Mammary epithelial cell (primary cell): ENCODE measurements at regions of chr5 and their contacts with region 1.

Region 1: GRCh38 chr5:65481635-65482295 is at the start of gene ADAMTS6:
- DNase-seq: peak; percentile 87
- H3K4me3 ChIP-seq: peak within 1 kb of the TSS; percentile 54 to 88 (median 80)
- H3K27ac ChIP-seq: peak within 1 kb of the TSS; percentile 76
- H3K4me1 ChIP-seq: peaks cover 9% of the 10 kb centered on the region
- H3K27me3 ChIP-seq: no peaks in the 10 kb centered on the region
- CTCF ChIP-seq: no peak
- total RNA-seq, gene ADAMTS6: 47.5 to 63.7 TPM

Region 2: GRCh38 chr5:64229163-64229774 is 1252.5 kb before region 1 on chr5:
- CTCF ChIA-PET with region 1: interaction called, 5 read pairs
- dilution Hi-C with region 1: no loop called
- in situ Hi-C with region 1: no loop called
- intact Hi-C with region 1: loop called (anchors 10 kb)
- DNase-seq: peak; percentile 15
- H3K4me3 ChIP-seq: no peak overlapping the region
- H3K27ac ChIP-seq: no peak overlapping the region
- H3K4me1 ChIP-seq: no peaks in the 10 kb centered on the region
- H3K27me3 ChIP-seq: no peaks in the 10 kb centered on the region
- CTCF ChIP-seq: peak; percentile 53 to 65

Region 3: GRCh38 chr5:64811050-64811640 is 670.6 kb before region 1 on chr5:
- CTCF ChIA-PET with region 1: interaction called, 26 read pairs
- dilution Hi-C with region 1: loop called (anchors 5 kb)
- in situ Hi-C with region 1: loop called (anchors 5 to 10 kb)
- intact Hi-C with region 1: loop called (anchors 1 kb)
- DNase-seq: peak; percentile 38
- H3K4me3 ChIP-seq: no peak overlapping the region
- H3K27ac ChIP-seq: no peak overlapping the region
- H3K4me1 ChIP-seq: no peaks in the 10 kb centered on the region
- H3K27me3 ChIP-seq: no peaks in the 10 kb centered on the region
- CTCF ChIP-seq: peak; percentile 45 to 70

Region 4: GRCh38 chr5:64958757-64959391 is 522.9 kb before region 1 on chr5:
- CTCF ChIA-PET with region 1: no interaction called
- dilution Hi-C with region 1: no loop called
- in situ Hi-C with region 1: loop called in 1 of 2 experiments (anchors 25 kb)
- intact Hi-C with region 1: loop called (anchors 1 kb)
- DNase-seq: no peak
- H3K4me3 ChIP-seq: no peak overlapping the region
- H3K27ac ChIP-seq: no peak overlapping the region
- H3K4me1 ChIP-seq: no peaks in the 10 kb centered on the region
- H3K27me3 ChIP-seq: no peaks in the 10 kb centered on the region
- CTCF ChIP-seq: peak; percentile 45 to 51

Region 5: DNA sequence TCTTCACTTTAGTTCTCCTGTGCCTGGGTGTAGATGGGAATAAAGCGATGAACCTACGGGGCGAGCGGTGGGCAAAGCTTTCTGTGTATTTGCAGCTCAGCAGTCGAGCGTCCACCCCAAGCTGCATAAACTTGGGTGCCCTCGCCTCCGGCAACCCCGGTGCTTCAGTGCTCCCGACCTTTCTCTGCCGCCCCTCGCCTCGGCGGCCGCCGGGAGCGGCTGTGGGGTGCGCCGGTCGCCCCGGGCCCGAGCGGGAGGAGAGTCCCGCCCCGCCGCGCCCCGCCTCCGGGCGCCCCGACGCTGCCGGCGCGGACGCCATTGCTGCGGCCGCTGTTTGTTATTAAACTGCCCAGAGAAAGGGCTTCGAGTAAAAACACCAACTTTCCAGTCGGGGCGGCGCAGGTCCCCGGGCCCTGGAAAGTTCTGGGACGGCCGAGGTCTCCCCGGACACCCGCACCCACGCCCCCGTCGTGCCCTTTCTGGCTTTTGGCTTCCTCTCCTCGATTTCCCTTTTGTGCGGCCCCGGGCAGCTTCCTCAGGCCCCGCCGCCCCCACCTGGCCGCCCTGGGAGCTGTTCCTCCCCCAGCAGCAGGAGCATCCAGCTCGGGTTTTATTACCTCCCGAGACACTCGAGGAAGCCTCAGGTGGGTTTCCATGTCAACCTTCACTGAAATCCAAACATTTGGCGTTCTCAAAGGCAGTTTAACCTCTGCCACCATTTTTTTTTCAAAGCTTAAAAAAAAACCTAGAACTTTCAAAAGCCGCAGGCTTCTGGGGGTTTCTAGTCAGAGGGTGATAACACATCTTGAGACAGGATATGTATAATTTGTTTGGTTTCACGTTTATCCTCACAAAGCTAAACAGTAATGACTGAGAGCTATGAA is 378.7 kb before region 1 on chr5:
- CTCF ChIA-PET with region 1: no interaction called
- dilution Hi-C with region 1: no loop called
- in situ Hi-C with region 1: no loop called
- intact Hi-C with region 1: loop called (anchors 2 kb)
- DNase-seq: no peak
- H3K4me3 ChIP-seq: peak overlapping the region in 2 of 3 experiments; percentile 21 to 39
- H3K27ac ChIP-seq: no peak overlapping the region
- H3K4me1 ChIP-seq: peaks cover 14% of the 10 kb centered on the region
- H3K27me3 ChIP-seq: no peaks in the 10 kb centered on the region
- CTCF ChIP-seq: peak in 1 of 2 donors; percentile 3

Region 6: GRCh38 chr5:65190328-65191053 is 291.3 kb before region 1 on chr5:
- CTCF ChIA-PET with region 1: no interaction called
- dilution Hi-C with region 1: no loop called
- in situ Hi-C with region 1: no loop called
- intact Hi-C with region 1: loop called (anchors 5 kb)
- DNase-seq: peak; percentile 99
- H3K4me3 ChIP-seq: no peak overlapping the region
- H3K27ac ChIP-seq: peak overlapping the region; percentile 94
- H3K4me1 ChIP-seq: peaks cover 40% of the 10 kb centered on the region
- H3K27me3 ChIP-seq: no peaks in the 10 kb centered on the region
- CTCF ChIP-seq: no peak

Region 7: DNA sequence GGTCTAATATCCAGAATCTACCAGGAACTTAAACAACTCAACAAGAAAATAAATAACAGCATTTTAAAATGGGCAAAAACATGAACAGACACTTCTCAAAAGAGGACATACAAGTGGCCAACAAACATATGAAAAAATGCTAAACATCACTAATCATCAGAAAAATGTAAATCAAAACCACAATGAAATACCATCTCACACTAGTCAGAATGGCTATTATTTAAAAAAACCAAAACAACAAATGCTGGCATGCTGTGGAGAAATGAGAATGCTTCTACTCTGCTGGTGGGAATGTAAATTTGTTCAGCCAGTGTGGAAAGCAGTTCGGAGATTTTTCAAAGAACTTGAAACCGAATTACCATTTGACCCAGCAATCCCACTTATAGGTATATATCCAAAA is 63.1 kb before region 1 on chr5:
- CTCF ChIA-PET with region 1: no interaction called
- dilution Hi-C with region 1: no loop called
- in situ Hi-C with region 1: no loop called
- intact Hi-C with region 1: no loop called
- DNase-seq: peak; percentile 4
- H3K4me3 ChIP-seq: no peak overlapping the region
- H3K27ac ChIP-seq: no peak overlapping the region
- H3K4me1 ChIP-seq: no peaks in the 10 kb centered on the region
- H3K27me3 ChIP-seq: no peaks in the 10 kb centered on the region
- CTCF ChIP-seq: no peak